ENCODE measurements at regions of chr12 and their contacts with region 1.

Region 1: DNA sequence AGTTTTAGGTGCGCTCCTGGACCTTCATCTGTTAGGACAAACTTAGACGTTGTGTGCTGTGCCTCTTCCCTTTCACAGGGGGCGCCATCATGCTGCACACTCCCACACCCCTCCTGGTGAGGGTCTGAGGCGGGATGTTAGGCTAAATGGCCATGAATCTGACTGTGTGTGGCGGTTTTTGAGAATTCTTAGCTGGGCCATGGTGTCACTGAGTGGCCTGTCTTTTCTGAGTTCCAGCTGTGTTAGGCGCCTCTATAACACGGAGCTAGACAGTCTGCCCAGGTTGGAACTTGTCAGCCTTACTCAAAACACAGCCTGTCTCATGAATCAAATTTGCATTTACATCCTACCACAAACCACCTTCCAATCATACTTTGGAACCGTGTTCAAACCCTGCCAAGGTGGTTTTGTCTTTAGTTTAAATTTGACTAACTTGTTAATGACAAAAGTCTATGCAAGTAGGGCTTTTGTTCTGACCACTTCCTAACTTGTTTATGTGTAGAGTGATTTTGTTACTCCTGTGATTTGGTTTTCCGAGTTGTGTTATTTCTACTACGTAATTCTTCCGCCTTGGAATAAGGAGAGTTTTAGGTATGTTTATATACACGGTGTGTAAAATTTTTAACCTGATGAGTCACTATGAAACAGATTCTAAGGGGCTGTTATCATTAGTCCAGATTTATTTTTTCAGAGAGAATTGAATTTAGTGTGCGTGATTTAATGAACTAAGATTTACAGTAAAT is 19.6 kb downstream of the ACVR1B start:
- DNase-seq: peak; percentile 56
- H3K4me3 Mint-ChIP-seq: peak overlapping the region; percentile 52
- H3K27ac Mint-ChIP-seq: peak overlapping the region; percentile 69
- H3K4me1 Mint-ChIP-seq: peaks cover 64% of the 10 kb centered on the region
- H3K27me3 Mint-ChIP-seq: peaks cover 27% of the 10 kb centered on the region

Region 2: DNA sequence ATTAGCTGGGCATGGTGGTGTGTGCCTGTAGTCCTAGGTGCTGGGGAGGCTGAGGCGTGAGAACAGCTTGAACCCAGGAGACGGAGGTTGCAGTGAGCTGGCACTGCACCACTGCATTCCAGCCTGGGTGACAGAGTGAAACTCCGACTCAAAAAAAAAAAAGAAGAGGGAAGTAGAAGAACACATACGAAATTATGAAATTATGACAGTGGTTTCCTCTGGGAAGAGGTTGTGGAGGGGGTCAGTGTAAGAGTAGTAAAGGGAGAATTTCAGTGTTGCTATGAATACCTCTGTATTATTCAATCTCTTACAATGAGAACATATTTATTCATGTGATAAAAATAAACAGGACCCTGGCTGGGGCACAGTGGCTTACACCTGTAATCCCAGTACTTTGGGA is 862.9 kb before region 1 on chr12:
- intact Hi-C with region 1: no loop called
- DNase-seq: no peak
- H3K4me3 Mint-ChIP-seq: no peak overlapping the region
- H3K27ac Mint-ChIP-seq: no peak overlapping the region
- H3K4me1 Mint-ChIP-seq: peaks cover 4% of the 10 kb centered on the region
- H3K27me3 Mint-ChIP-seq: no peaks in the 10 kb centered on the region

Region 3: DNA sequence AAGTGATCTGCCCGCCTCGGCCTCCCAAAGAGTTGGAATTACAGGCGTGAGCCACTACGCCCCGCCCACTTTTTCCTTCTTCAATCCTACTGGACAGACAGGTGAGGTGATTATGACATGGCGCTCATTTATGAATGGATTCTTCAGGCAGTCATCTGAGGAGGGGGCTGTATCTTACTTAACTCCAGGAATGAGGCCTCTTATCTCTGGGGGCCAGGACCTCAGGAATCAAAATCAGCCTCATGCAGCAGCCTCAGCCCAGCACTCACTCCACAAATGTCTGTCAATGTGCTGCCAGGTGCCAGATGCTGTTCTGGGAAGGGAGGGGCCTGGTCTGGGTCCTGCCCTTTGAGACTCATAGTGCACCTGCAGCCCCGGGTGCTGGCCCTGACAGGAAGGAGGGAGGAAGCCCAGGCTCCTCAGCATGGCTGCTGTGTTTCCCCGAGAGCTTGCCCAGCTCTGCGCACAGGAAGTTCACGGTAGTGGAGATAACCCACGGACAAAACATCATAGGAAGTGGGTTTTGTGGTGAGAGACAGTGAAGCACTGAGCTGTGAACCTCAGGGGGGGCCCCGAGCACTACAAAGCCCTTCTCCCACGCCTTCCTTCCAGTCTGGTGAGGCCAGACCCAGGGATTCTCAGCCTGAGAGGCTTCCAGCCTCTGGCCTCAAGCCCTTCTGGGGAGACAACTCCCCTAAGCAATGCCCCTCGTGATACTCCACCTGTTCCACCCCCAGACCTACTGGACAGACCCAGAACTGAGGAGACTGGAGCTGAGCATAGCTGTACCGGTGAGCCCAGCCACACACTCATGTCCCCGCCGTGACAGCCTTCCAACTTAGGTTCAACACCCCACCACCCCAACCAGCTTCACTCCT is 602.2 kb before region 1 on chr12:
- intact Hi-C with region 1: loop called (anchors 1 kb)
- DNase-seq: peak; percentile 89
- H3K4me3 Mint-ChIP-seq: peak overlapping the region; percentile 56
- H3K27ac Mint-ChIP-seq: peak overlapping the region; percentile 70
- H3K4me1 Mint-ChIP-seq: peaks cover 67% of the 10 kb centered on the region
- H3K27me3 Mint-ChIP-seq: peaks cover 7% of the 10 kb centered on the region

Region 4: GRCh38 chr12:51590347-51591019 is 380.6 kb before region 1 on chr12:
- intact Hi-C with region 1: loop called (anchors 5 kb)
- DNase-seq: peak; percentile 72
- H3K4me3 Mint-ChIP-seq: peak overlapping the region; percentile 88
- H3K27ac Mint-ChIP-seq: peak overlapping the region; percentile 77
- H3K4me1 Mint-ChIP-seq: peaks cover 10% of the 10 kb centered on the region
- H3K27me3 Mint-ChIP-seq: peaks cover 61% of the 10 kb centered on the region

Region 5: DNA sequence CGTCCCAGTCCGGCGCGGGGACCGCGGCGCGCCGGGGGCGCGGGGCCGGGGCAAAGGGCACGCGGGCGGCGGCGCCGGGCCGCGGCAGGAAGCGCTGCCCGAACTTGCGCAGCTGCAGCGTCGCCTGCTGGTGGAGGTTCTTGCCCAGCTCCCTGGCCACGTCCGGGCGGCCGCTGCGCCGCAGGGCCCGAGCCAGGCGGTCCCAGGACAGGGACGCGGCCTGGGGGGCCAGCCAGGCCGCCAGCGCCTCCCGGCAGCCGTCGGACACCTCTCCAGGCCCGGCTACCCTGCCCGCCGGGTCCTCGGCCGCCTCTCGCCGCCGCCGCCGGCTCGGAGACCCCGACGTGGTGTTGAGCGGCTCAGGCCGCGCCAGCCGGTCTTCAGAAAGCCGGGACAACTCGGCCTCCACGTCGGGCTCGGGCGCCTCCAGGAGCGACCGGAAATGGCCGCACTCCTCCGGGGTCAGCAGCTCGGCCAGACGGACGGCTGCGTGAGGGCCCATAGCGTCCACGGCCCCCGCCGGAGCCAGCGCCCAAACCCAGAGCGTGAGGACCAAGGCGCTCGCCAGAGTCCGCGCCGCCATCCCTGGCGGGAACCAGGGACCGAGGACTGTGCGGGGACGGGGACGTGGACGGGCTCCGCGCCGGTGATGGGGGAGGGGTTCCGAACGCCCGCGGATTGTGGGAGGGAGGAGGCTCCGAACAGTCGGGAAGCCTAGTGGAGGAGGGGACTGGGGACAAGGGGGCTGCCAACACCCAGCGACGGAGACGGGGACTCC is 156.6 kb before region 1 on chr12:
- intact Hi-C with region 1: no loop called
- DNase-seq: peak; percentile 59
- H3K4me3 Mint-ChIP-seq: peak overlapping the region; percentile 51
- H3K27ac Mint-ChIP-seq: no peak overlapping the region
- H3K4me1 Mint-ChIP-seq: peaks cover 6% of the 10 kb centered on the region
- H3K27me3 Mint-ChIP-seq: peaks cover 45% of the 10 kb centered on the region

Region 6: GRCh38 chr12:51951199-51951842 is 19.8 kb before region 1 on chr12 and contains the start of gene ACVR1B:
- intact Hi-C with region 1: loop called (anchors 1 kb)
- DNase-seq: peak; percentile 83
- H3K4me3 Mint-ChIP-seq: peak within 1 kb of the TSS; percentile 89
- H3K27ac Mint-ChIP-seq: peak within 1 kb of the TSS; percentile 67
- H3K4me1 Mint-ChIP-seq: peaks cover 51% of the 10 kb centered on the region
- H3K27me3 Mint-ChIP-seq: peaks cover 40% of the 10 kb centered on the region
- total RNA-seq, gene ACVR1B: 11.4 and 12.0 TPM in 2 replicates

Region 7: DNA sequence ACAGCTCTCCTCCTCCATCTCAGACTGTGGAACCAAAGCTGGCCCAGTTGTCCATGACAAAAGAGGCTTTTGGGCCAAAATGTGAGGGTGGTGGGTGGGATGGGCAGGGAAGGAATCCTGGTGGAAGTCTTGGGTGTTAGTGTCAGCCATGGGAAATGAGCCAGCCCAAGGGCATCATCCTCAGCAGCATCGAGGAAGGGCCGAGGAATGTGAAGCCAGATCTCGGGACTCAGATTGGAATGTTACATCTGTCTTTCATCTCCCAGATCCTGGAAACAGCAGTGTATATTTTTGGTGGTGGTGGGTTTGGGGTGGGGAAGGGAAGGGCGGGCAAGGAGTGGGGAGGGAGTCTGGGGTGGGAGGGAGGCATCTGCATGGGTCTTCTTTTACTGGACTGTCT is 23.9 kb after region 1 on chr12:
- intact Hi-C with region 1: no loop called
- DNase-seq: no peak
- H3K4me3 Mint-ChIP-seq: no peak overlapping the region
- H3K27ac Mint-ChIP-seq: no peak overlapping the region
- H3K4me1 Mint-ChIP-seq: peaks cover 14% of the 10 kb centered on the region
- H3K27me3 Mint-ChIP-seq: no peaks in the 10 kb centered on the region

Region 8: GRCh38 chr12:52213512-52214420 is 242.7 kb after region 1 on chr12:
- intact Hi-C with region 1: no loop called
- DNase-seq: peak; percentile 52
- H3K4me3 Mint-ChIP-seq: no peak overlapping the region
- H3K27ac Mint-ChIP-seq: peak overlapping the region; percentile 9
- H3K4me1 Mint-ChIP-seq: no peaks in the 10 kb centered on the region
- H3K27me3 Mint-ChIP-seq: peaks cover 18% of the 10 kb centered on the region

Region 9: DNA sequence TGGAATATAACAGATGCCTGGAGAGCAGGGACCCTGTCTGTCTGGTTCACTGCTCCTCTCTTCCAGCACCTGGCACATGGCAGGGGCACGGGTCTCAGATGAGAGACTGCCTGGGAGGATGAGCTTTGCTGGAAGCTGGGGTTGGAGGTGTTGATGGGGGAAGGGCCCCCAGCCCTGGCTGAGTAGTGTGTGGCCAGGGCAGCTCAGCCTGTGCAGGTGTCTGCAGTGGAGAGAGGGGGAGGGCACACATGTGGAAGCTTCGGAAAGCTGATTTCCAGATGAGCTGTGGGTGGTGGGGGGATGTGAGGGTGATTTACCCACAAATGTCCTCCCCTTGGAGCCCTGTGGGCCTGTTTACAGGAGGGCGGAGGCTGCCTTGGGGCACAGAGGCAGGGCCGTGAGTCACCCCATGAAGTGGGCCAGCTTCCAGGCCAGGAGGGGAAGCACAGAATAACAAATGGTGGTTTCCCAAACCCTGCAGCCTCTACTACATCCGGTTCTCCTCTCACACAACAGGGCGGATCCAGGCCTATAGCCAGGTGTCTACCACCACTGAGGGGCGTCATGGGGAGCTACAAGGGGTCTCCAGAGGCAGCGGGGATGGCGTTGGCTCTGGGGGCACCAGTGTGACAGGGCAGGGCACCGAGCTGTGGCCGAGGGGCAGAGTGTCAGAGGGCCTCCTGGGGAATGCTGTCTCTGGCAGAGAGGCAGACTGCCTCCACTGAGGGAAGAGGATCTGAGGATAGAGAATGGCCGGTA is 273.0 kb after region 1 on chr12:
- intact Hi-C with region 1: loop called (anchors 5 kb)
- DNase-seq: peak; percentile 76
- H3K4me3 Mint-ChIP-seq: peak overlapping the region; percentile 94
- H3K27ac Mint-ChIP-seq: peak overlapping the region; percentile 98
- H3K4me1 Mint-ChIP-seq: peaks cover 73% of the 10 kb centered on the region
- H3K27me3 Mint-ChIP-seq: peaks cover 4% of the 10 kb centered on the region